CD8-positive, alpha-beta T cell (primary cell): ENCODE measurements at regions of chr9 and their contacts with region 1.

Region 1: DNA sequence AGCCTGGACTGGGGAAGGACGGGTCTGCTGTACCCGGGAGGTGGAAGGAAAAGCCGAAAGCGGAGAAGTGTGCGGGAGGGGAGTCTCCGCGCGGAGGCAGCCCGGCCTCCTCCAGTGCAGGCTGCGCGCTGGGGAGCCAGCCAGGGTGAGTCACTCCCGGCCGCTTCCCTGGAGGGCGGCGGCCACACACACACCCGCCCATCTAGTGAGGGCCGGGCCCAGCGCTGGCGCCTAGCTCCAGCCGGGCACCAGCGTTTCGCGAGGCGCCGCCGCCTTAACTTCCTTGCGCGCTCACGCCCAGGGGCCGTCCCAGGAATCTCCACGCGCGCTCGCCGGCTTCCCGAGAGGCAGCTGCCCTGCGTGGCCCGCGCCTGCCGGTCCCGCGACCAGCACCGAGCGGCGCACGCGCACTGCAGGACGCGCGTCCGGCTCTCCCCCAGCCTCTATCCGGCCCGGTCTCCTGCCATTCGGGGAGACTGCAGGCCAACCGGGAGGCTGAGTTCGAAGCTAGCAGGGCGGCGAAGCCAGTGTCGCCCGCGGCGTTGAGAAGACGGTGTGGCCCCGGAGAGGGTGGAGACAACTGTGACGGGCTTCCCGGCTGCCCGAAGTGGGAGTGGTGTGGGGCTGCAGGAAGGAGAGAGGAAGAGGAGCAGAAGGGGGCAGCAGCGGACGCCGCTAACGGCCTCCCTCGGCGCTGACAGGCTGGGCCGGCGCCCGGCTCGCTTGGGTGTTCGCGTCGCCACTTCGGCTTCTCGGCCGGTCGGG is at the start of gene JAK2:
- DNase-seq: peak; percentile 44 to 90 (median 74)
- ATAC-seq: peak; percentile 85
- H3K4me3 ChIP-seq: peak within 1 kb of the TSS; percentile 62 to 78
- H3K4me3 Mint-ChIP-seq: peak within 1 kb of the TSS; percentile 92
- H3K27ac ChIP-seq: peak within 1 kb of the TSS; percentile 58 to 80
- H3K27ac Mint-ChIP-seq: peak within 1 kb of the TSS; percentile 91
- H3K4me1 ChIP-seq: peaks cover 26% of the 10 kb centered on the region
- H3K4me1 Mint-ChIP-seq: peaks cover 25% of the 10 kb centered on the region
- H3K27me3 ChIP-seq: no peaks in the 10 kb centered on the region
- H3K27me3 Mint-ChIP-seq: no peaks in the 10 kb centered on the region
- CTCF ChIP-seq: no peak
- total RNA-seq, gene JAK2: 4.6 to 6.1 TPM

Region 2: GRCh38 chr9:4315582-4316215 is 669.1 kb before region 1 on chr9:
- CTCF ChIA-PET with region 1: no interaction called
- POLR2A ChIA-PET with region 1: no interaction called
- intact Hi-C with region 1: loop called in 1 of 2 experiments (anchors 10 kb)
- DNase-seq: peak; percentile 42 to 85 (median 72)
- ATAC-seq: peak; percentile 90
- H3K4me3 ChIP-seq: no peak overlapping the region
- H3K4me3 Mint-ChIP-seq: no peak overlapping the region
- H3K27ac ChIP-seq: no peak overlapping the region
- H3K27ac Mint-ChIP-seq: no peak overlapping the region
- H3K4me1 ChIP-seq: peaks cover 19% of the 10 kb centered on the region
- H3K4me1 Mint-ChIP-seq: peaks cover 19% of the 10 kb centered on the region
- H3K27me3 ChIP-seq: no peaks in the 10 kb centered on the region
- H3K27me3 Mint-ChIP-seq: peaks cover 5% of the 10 kb centered on the region
- CTCF ChIP-seq: peak; percentile 76

Region 3: GRCh38 chr9:4679268-4680172 is 305.3 kb before region 1 on chr9 and contains the start of gene CDC37L1:
- CTCF ChIA-PET with region 1: no interaction called
- POLR2A ChIA-PET with region 1: interaction called, 3 read pairs
- intact Hi-C with region 1: loop called (anchors 1 to 10 kb)
- DNase-seq: peak; percentile 98 to 100 (median 99)
- ATAC-seq: peak; percentile 86
- H3K4me3 ChIP-seq: peak within 1 kb of the TSS; percentile 70 to 94
- H3K4me3 Mint-ChIP-seq: no peak within 1 kb of the TSS
- H3K27ac ChIP-seq: peak within 1 kb of the TSS; percentile 92 to 96
- H3K27ac Mint-ChIP-seq: no peak within 1 kb of the TSS
- H3K4me1 ChIP-seq: peaks cover 20% of the 10 kb centered on the region
- H3K4me1 Mint-ChIP-seq: peaks cover 12% of the 10 kb centered on the region
- H3K27me3 ChIP-seq: no peaks in the 10 kb centered on the region
- H3K27me3 Mint-ChIP-seq: no peaks in the 10 kb centered on the region
- CTCF ChIP-seq: peak; percentile 87
- total RNA-seq, gene CDC37L1: 35.1 to 36.1 TPM

Region 4: GRCh38 chr9:4850603-4851310 is 134.0 kb before region 1 on chr9:
- CTCF ChIA-PET with region 1: no interaction called
- POLR2A ChIA-PET with region 1: no interaction called
- intact Hi-C with region 1: loop called in 1 of 2 experiments (anchors 2 kb)
- DNase-seq: peak in 1 of 9 experiments; percentile 9
- ATAC-seq: no peak
- H3K4me3 ChIP-seq: no peak overlapping the region
- H3K4me3 Mint-ChIP-seq: no peak overlapping the region
- H3K27ac ChIP-seq: no peak overlapping the region
- H3K27ac Mint-ChIP-seq: peak overlapping the region; percentile 9
- H3K4me1 ChIP-seq: no peaks in the 10 kb centered on the region
- H3K4me1 Mint-ChIP-seq: no peaks in the 10 kb centered on the region
- H3K27me3 ChIP-seq: no peaks in the 10 kb centered on the region
- H3K27me3 Mint-ChIP-seq: no peaks in the 10 kb centered on the region
- CTCF ChIP-seq: no peak

Region 5: DNA sequence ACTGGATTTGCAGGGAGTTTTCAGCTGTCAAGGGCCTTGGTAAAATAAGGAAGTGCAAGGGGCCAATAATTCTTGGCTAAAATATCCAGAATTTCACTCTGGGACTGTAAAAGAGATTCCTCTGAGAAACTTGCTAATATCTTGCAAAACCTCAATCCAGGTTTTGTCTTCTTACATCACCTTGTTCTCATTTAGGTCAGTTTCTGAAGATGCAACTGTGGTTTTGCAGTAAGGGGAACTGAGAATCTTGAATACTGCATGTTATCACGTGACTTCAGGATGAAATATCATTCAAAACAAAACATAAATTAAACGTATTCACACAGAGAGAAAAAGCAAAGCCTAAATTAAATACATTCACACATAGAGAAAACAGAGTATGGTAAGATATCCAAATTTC is 609.1 kb after region 1 on chr9:
- CTCF ChIA-PET with region 1: interaction called, 4 read pairs
- POLR2A ChIA-PET with region 1: no interaction called
- intact Hi-C with region 1: loop called (anchors 5 to 10 kb)
- DNase-seq: peak in 1 of 9 experiments; percentile 17
- ATAC-seq: no peak
- H3K4me3 ChIP-seq: no peak overlapping the region
- H3K4me3 Mint-ChIP-seq: no peak overlapping the region
- H3K27ac ChIP-seq: no peak overlapping the region
- H3K27ac Mint-ChIP-seq: no peak overlapping the region
- H3K4me1 ChIP-seq: no peaks in the 10 kb centered on the region
- H3K4me1 Mint-ChIP-seq: peaks cover 6% of the 10 kb centered on the region
- H3K27me3 ChIP-seq: no peaks in the 10 kb centered on the region
- H3K27me3 Mint-ChIP-seq: no peaks in the 10 kb centered on the region
- CTCF ChIP-seq: no peak

Region 6: DNA sequence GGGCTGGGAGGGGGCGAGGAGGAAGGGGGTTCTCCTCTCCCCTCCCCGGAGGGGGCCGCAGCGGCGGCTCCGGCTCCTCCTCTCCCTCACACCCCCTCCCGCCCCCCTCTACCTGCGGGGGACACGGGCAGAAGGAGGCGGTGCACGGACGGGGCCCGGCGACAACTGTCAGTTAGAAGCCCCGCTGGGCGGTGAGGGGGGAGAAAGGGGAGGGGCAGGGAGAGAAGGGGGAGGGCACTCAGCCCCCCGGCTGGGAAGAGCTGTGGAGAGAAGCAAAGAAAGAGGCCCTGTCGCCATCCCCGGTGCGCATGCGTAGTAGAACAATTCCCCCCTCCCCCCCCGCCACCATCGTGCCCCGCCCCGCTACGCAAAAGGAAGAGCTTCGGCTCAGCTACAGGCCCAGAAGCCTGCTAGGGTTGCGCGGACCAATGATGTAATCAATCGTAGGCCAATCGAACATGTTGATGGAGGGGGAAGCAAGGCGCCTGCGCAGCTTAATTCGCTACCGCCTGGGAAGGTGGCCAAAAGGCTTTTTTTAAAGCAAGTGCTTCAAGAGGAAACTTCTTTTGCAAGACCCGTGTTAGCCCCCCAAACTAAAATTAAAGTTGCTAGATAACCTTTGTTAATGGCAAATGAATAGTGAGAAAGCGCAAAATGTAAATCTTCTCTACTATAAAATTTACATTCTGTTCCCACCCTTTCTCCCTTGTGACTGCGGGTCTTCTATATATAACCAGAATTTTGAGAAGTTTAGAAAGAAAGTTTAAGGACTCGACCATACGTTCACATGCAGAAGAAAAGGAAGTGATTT is 1023.6 kb after region 1 on chr9:
- CTCF ChIA-PET with region 1: no interaction called
- POLR2A ChIA-PET with region 1: no interaction called
- intact Hi-C with region 1: loop called (anchors 5 kb)
- DNase-seq: peak; percentile 89 to 99 (median 93)
- ATAC-seq: peak; percentile 72
- H3K4me3 ChIP-seq: peak overlapping the region; percentile 75 to 77
- H3K4me3 Mint-ChIP-seq: peak overlapping the region; percentile 85
- H3K27ac ChIP-seq: peak overlapping the region; percentile 82 to 94
- H3K27ac Mint-ChIP-seq: peak overlapping the region; percentile 89
- H3K4me1 ChIP-seq: peaks cover 32% of the 10 kb centered on the region
- H3K4me1 Mint-ChIP-seq: peaks cover 54% of the 10 kb centered on the region
- H3K27me3 ChIP-seq: no peaks in the 10 kb centered on the region
- H3K27me3 Mint-ChIP-seq: no peaks in the 10 kb centered on the region
- CTCF ChIP-seq: no peak